Activated B cell treated with CpG ODN at 0.5 μM for 24 hours (primary cell): ENCODE measurements at regions of chr22 and their contacts with region 1.

Region 1: DNA sequence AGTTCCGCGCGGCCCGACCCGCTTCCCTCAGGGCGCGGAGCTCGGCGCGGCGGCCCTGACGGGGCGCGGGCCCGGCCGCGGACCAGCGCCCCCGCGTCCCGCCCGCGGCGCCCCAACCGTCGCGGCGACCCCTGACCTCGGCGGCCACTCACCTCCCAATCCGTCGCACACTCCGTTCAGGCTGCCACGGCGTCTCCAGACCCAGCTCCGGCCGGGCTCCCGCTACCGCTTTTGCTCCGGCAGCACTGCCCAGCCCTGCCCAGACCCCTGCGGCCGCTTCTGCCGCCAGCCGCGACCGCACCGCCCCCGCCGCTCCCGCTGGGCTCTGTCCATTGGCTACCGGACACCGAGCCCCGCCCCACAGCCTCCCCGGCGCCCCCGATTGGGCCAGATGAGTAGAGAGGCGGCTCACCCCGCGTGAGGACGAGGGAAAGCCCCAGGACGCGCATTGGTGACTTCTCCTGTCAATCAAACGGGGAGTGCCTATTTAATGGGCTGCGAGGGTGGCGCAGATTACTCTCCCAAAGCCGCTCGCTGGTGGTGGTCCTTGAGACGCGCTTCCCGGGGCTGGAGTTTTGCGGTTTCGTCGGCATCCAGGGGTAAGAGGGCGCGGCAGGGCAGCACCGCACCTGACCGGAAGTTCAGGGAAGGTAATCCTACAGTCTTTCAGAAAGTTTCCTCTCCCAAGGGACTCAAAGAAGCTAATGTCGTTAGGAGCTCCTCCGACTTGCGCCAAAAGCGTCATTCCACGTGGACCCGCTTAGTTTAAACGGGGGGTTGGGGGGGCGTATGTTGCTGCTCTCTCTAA is at the start of gene PACSIN2:
- DNase-seq: peak; percentile 97
- ATAC-seq: peak; percentile 98
- H3K4me3 Mint-ChIP-seq: peak within 1 kb of the TSS; percentile 95
- H3K27ac Mint-ChIP-seq: peak within 1 kb of the TSS; percentile 89
- H3K4me1 Mint-ChIP-seq: peaks cover 31% of the 10 kb centered on the region
- H3K27me3 Mint-ChIP-seq: no peaks in the 10 kb centered on the region
- CTCF ChIP-seq: no peak
- total RNA-seq, gene PACSIN2: 47.5 and 48.9 TPM in 2 replicates

Region 2: DNA sequence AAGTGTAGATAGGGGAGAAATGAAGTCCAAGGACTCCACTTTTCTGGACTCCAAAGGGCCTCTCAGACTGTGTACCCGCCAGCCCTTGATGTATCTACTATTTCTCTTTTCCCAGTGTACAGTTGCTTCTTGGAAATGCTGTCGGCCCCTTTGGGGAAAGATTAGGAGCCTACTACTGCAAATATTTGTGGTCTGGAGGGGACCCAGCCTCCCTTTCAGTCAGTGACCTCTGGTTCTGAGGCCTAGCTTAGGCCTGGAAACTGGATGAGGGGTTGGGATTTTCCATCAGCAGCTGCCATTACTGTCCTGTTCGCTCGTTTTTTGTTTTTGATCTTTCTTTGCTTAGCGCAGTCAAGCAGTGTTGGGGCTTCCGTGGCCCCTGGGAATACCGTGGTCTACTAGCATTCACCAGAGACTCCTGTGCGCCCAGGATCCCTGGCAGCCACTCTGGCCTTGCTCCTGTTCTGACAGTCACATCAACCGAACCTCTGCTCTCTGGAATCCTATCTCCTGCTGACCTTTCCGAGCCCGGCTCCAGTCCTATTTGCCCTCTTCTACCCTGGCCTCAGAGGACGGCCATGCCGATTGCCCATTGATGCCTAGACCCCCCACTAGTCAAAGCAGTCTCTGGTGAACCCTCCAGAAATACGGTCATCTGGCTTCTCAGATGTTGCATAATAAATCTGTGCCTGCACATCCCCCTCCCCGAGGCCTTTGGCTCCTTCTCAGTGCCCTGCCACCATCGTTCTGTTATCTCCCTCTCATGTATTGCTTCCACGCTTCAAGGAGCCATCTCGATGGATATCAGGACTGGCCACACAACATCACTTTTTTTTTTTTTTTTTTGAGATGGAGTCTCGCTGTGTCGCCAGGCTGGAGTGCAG is 494.2 kb before region 1 on chr22:
- CTCF ChIA-PET with region 1: no interaction called
- POLR2A ChIA-PET with region 1: interaction called, 12 read pairs
- intact Hi-C with region 1: no loop called
- DNase-seq: no peak
- ATAC-seq: no peak
- H3K4me3 Mint-ChIP-seq: peak overlapping the region; percentile 59
- H3K27ac Mint-ChIP-seq: no peak overlapping the region
- H3K4me1 Mint-ChIP-seq: peaks cover 18% of the 10 kb centered on the region
- H3K27me3 Mint-ChIP-seq: no peaks in the 10 kb centered on the region
- CTCF ChIP-seq: no peak

Region 3: GRCh38 chr22:42863349-42863961 is 151.6 kb before region 1 on chr22:
- CTCF ChIA-PET with region 1: interaction called, 11 read pairs
- POLR2A ChIA-PET with region 1: interaction called, 3 read pairs
- intact Hi-C with region 1: no loop called
- DNase-seq: no peak
- ATAC-seq: peak; percentile 60
- H3K4me3 Mint-ChIP-seq: peak overlapping the region; percentile 64
- H3K27ac Mint-ChIP-seq: peak overlapping the region; percentile 96
- H3K4me1 Mint-ChIP-seq: peaks cover 45% of the 10 kb centered on the region
- H3K27me3 Mint-ChIP-seq: no peaks in the 10 kb centered on the region
- CTCF ChIP-seq: no peak

Region 4: GRCh38 chr22:42910221-42910942 is 104.7 kb before region 1 on chr22:
- CTCF ChIA-PET with region 1: no interaction called
- POLR2A ChIA-PET with region 1: interaction called, 3 read pairs
- intact Hi-C with region 1: loop called (anchors 5 kb)
- DNase-seq: no peak
- ATAC-seq: no peak
- H3K4me3 Mint-ChIP-seq: no peak overlapping the region
- H3K27ac Mint-ChIP-seq: no peak overlapping the region
- H3K4me1 Mint-ChIP-seq: peaks cover 16% of the 10 kb centered on the region
- H3K27me3 Mint-ChIP-seq: no peaks in the 10 kb centered on the region
- CTCF ChIP-seq: no peak

Region 5: DNA sequence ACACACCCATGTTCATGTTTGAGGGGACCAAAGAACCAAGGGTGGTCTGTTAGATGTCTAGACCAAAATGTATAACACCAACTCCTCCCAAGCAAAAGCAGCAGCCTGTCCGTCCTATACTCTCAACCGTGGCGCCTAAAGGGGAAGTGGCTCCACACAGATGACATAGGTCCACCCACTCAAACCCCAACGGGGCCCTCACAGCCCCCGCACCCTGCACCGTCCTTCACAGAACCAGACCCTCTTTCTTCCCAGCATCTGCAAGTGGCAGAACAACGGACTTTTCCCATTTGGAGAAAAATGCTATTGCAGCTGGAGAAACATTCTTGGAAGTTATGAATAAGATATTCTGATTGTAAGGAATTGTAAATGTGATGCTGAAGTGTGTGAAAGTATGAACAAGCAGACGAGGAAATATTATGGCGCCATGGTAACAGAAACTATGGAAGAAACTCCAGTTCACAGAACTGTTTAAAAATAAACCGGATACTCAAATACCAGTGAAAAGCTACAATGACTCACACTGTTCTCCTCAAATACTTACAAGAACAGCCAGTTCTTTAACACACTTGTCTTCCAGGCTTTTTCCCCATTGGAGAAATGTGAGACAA is 81.5 kb before region 1 on chr22:
- CTCF ChIA-PET with region 1: interaction called, 4 read pairs
- POLR2A ChIA-PET with region 1: interaction called, 18 read pairs
- intact Hi-C with region 1: loop called (anchors 1 kb)
- DNase-seq: peak; percentile 59
- ATAC-seq: peak; percentile 73
- H3K4me3 Mint-ChIP-seq: peak overlapping the region; percentile 82
- H3K27ac Mint-ChIP-seq: peak overlapping the region; percentile 98
- H3K4me1 Mint-ChIP-seq: peaks cover 99% of the 10 kb centered on the region
- H3K27me3 Mint-ChIP-seq: no peaks in the 10 kb centered on the region
- CTCF ChIP-seq: no peak

Region 6: DNA sequence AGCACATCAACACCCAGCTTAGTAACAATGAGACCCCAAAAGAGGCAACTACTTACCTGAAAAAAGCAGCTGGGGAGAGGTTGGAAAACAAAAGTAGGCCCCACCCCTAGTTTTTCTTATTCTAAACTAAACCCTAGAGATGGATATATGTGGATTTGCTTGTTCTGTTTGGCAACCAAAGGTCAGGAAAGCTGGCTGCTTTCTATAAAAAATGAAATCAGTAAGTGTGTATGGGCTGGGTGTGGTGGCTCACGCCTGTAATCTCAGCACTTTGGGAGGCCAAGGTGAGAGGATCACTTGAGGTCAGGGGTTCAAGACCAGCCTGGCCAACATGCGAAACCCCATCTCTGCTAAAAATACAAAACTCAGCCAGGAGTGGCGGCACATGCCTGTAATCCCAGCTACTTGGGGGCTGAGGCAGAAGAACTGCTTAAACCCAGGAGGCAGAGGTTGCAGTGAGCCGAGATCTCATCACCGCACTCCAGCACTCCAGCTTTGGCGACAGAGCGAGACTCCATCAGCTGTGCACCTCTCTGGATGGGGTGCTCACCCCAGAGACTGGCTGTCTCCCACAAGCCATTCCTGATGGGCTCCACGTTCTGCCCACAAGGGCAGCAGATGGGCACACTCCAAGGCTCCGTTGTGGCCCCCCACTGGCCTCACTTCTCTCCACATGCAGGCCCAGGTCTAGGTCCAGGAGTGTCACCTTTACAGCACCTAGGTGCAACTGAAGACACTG is 30.1 kb before region 1 on chr22:
- CTCF ChIA-PET with region 1: no interaction called
- POLR2A ChIA-PET with region 1: no interaction called
- intact Hi-C with region 1: no loop called
- DNase-seq: no peak
- ATAC-seq: no peak
- H3K4me3 Mint-ChIP-seq: no peak overlapping the region
- H3K27ac Mint-ChIP-seq: peak overlapping the region; percentile 56
- H3K4me1 Mint-ChIP-seq: peaks cover 19% of the 10 kb centered on the region
- H3K27me3 Mint-ChIP-seq: no peaks in the 10 kb centered on the region
- CTCF ChIP-seq: no peak

Region 7: GRCh38 chr22:43001271-43002201 is 13.5 kb before region 1 on chr22:
- CTCF ChIA-PET with region 1: interaction called, 3 read pairs
- POLR2A ChIA-PET with region 1: interaction called, 21 read pairs
- intact Hi-C with region 1: loop called (anchors 2 kb)
- DNase-seq: no peak
- ATAC-seq: peak; percentile 55
- H3K4me3 Mint-ChIP-seq: peak overlapping the region; percentile 3
- H3K27ac Mint-ChIP-seq: peak overlapping the region; percentile 41
- H3K4me1 Mint-ChIP-seq: peaks cover 87% of the 10 kb centered on the region
- H3K27me3 Mint-ChIP-seq: no peaks in the 10 kb centered on the region
- CTCF ChIP-seq: no peak

Region 8: DNA sequence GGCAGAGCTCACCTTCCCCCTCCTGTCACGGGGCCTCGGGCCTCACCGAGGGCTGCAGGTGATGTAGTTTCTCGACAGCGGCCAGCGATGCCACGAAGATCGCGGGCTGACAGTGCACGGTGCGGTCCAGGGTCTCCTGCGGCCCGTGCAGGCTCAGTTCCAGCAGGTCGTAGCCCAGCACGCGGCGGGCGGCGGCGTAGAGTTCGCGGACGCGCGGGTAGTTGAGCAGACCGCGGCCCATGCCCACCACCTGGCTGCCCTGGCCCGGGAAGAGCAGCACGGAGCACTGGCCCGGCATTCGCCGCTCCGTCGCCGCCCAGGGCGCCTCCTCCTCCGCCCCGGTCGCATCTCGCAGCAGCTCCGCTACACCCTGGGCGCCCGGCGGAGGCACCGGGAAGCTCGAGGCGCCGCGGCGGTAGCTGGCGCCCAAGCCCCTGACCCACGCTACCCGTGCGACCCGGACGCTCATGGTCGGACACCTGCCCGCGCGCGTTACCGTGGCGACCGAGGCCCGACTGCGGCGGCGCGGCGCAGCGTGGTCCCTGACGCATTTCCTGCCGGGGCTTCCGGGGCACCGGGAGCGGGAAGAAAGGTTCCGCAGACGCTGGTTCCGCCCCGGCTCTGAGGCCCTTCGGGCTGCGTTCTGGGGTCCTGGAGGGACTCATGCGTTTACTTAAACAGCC is 127.9 kb after region 1 on chr22 and contains the start of gene MCAT:
- CTCF ChIA-PET with region 1: no interaction called
- POLR2A ChIA-PET with region 1: interaction called, 4 read pairs
- intact Hi-C with region 1: loop called (anchors 10 kb)
- DNase-seq: peak; percentile 85
- ATAC-seq: peak; percentile 80
- H3K4me3 Mint-ChIP-seq: peak within 1 kb of the TSS; percentile 85
- H3K27ac Mint-ChIP-seq: peak within 1 kb of the TSS; percentile 90
- H3K4me1 Mint-ChIP-seq: peaks cover 37% of the 10 kb centered on the region
- H3K27me3 Mint-ChIP-seq: no peaks in the 10 kb centered on the region
- CTCF ChIP-seq: no peak
- total RNA-seq, gene MCAT: 12.7 and 13.2 TPM in 2 replicates

Region 9: DNA sequence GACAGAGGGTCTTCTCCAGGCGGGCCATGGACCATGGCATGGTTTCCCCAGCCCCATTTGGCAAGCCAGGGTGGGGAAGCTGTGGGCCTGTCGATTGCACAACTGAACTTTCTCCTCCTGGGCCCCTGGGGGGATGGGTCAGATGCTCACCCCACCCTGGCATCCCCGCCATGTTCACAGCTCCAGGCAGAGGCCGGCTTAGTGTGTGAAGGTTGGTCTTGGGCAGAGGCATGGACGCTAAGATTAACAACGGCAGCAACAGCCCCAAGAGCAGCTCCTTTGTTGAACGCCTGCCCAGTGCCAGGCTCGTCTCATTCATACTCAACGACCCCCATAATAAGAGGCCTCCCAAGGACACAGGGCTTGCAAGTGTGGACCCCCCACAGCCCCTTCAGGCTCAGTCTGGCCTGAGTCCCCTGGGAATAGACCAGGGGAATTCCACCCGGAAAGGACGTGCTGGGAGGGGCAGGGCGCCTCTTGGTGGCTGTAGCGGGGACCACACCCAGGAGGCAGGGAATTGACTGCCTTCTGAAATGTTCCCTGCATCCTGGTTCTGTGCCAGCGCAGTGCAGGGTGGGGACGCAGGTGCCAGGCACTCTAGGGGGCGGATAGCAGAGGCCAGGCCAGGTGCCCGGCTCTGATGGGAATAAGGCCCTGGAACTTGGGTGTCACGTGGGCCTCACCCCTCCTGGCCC is 144.6 kb after region 1 on chr22:
- CTCF ChIA-PET with region 1: no interaction called
- POLR2A ChIA-PET with region 1: no interaction called
- intact Hi-C with region 1: no loop called
- DNase-seq: no peak
- ATAC-seq: no peak
- H3K4me3 Mint-ChIP-seq: no peak overlapping the region
- H3K27ac Mint-ChIP-seq: no peak overlapping the region
- H3K4me1 Mint-ChIP-seq: peaks cover 21% of the 10 kb centered on the region
- H3K27me3 Mint-ChIP-seq: no peaks in the 10 kb centered on the region
- CTCF ChIP-seq: no peak